SK-N-SH (cell line): ENCODE measurements at regions of chr7 and their contacts with region 1.

Region 1: GRCh38 chr7:29189743-29190201 is 4.8 kb upstream of the CHN2 start:
- DNase-seq: peak; percentile 87
- H3K4me3 ChIP-seq: no peak overlapping the region; a peak in 2 of 4 replicates
- H3K27ac ChIP-seq: no peak overlapping the region
- H3K4me1 ChIP-seq: peaks cover 0 to 6% of the 10 kb centered on the region in 2 experiments; a peak in 1 of 4 replicates
- H3K27me3 ChIP-seq: peaks cover 19% of the 10 kb centered on the region
- CTCF ChIP-seq: peak; percentile 91
- EP300 ChIP-seq: no peak
- RAD21 ChIP-seq: peak; percentile 87

Region 2: DNA sequence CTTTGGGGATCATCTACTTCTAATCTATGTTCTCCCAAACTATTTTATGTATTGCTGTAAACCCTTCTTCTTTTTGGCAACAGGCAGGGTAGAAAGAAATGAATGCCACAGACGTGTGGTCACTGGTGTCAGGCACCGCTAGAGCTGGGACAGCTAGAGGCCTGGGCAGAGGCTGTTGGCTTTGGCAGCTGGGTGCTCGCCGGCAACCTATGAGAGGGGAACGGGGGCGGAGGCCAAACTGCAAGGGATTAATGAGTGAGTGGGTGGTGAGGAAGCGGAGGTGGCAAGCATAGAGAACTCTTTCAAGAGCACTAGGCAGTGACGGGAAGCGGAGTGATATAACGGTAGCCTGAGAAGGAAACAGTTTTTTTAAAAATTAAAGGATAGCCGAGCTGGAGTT is 698.9 kb before region 1 on chr7:
- CTCF ChIA-PET with region 1: no interaction called
- POLR2A ChIA-PET with region 1: no interaction called
- DNase-seq: no peak
- H3K4me3 ChIP-seq: no peak overlapping the region
- H3K27ac ChIP-seq: no peak overlapping the region
- H3K4me1 ChIP-seq: peaks cover 0 to 3% of the 10 kb centered on the region in 2 experiments; a peak in 1 of 4 replicates
- H3K27me3 ChIP-seq: no peaks in the 10 kb centered on the region
- CTCF ChIP-seq: no peak
- EP300 ChIP-seq: no peak
- RAD21 ChIP-seq: no peak

Region 3: DNA sequence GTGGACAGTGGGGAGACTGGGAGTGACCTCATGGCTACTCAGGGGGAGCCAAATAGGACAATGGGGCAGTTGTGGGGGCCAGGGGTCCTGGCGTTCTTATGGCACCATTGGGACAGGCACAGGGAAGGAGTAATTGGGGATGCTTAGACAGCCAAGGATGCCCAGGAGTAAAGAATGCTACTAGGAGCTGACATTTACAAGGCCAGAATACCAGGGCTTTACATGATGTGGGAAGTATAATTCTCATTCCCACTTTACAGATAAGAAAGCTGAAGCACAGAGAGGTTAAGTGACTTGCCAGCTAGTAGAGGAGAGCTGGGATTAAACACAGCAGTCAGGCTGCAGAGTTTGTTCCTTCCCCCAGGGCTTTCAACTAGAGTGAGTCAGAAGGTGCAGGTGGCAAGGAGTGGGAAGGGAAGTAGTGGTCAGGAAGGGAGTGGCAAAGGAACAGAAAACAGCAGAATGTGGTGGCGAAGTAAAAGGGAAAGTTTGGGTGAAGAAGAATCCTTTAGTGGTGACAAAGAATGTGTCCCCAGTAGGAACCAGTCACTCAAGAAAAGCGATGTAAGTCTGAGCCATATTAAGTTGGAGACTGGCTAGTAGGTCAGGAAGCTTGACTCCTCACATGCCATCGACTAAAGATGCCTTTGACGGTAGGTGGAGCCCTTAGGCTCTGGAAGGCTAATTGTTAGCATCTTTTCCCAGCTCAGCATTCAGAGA is 76.2 kb before region 1 on chr7:
- CTCF ChIA-PET with region 1: interaction called, 38 read pairs
- POLR2A ChIA-PET with region 1: no interaction called
- DNase-seq: no peak
- H3K4me3 ChIP-seq: no peak overlapping the region
- H3K27ac ChIP-seq: no peak overlapping the region
- H3K4me1 ChIP-seq: no peaks in the 10 kb centered on the region
- H3K27me3 ChIP-seq: peaks cover 15% of the 10 kb centered on the region
- CTCF ChIP-seq: peak; percentile 24; the same call in 1 of the 2 replicates
- EP300 ChIP-seq: no peak
- RAD21 ChIP-seq: peak; percentile 62

Region 4: DNA sequence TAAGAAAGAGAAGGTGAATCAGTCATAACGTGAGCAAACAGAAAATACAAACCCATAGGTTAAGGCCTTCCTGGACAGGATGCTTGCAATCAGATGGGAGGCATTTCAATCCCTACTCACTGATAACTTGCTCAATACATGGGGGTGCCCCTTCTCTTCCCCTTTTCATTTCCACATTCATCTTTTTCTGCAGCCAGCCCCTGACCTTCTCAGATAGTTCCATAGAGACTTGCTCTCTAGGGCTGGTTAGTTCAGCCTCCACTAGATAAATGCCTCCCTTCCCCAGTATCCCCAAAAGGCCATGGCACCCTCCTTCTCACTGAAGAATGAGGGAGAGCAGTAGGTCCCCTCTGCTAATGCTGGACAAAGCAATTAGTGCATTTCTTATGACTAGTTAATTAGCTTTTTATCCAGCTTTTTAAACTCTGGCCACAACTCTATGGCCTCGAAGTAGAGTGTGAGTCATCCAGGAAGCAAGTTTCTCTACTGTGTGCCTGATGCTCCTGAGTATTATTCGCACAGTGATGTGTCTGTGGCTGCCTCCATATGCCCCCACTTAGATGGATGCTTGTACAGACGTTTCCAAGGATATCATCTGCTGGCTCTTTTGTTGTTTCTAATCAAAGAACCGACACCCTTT is 17.5 kb after region 1 on chr7:
- CTCF ChIA-PET with region 1: interaction called, 69 read pairs
- POLR2A ChIA-PET with region 1: no interaction called
- DNase-seq: no peak
- H3K4me3 ChIP-seq: no peak overlapping the region
- H3K27ac ChIP-seq: no peak overlapping the region
- H3K4me1 ChIP-seq: no peaks in the 10 kb centered on the region
- H3K27me3 ChIP-seq: no peaks in the 10 kb centered on the region
- CTCF ChIP-seq: no peak
- EP300 ChIP-seq: no peak
- RAD21 ChIP-seq: no peak

Region 5: DNA sequence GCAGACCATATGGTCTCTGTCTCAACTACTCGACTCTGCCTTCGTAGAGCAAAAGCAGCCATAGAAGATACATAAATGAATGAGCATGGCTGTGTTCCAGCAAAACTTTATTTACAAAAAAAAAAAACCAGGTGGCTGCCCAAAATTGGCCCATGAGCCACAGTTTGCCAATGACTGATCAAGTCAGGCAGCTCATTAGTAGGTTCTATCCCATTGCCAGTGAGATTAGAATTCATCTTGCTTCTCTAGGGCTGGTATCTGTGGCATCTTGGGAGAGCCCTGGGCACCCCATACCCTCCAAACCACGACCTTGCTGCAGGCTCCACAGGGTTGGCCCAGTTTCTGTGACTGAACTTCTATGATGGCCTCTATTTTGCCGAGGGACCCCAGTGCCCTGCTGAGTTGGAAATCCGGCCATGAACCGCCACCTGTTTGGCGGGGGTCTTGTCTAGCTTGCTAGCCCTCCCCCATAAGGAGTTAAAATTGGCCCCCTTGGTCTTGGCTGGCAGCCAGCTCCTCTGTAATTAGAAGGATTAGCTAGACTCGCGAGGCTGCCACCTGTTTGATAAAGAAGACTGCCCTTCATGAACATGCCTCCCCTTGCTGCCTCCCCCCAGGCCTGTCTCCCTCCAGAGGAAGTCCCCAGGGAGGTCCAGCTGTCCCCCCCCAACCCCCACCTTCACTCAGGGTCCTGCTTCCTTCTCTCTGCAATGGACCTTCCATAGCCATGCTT is 88.7 kb after region 1 on chr7:
- CTCF ChIA-PET with region 1: interaction called, 18 read pairs
- POLR2A ChIA-PET with region 1: no interaction called
- DNase-seq: no peak
- H3K4me3 ChIP-seq: no peak overlapping the region
- H3K27ac ChIP-seq: no peak overlapping the region
- H3K4me1 ChIP-seq: peaks cover 0 to 18% of the 10 kb centered on the region in 2 experiments; a peak in 3 of 4 replicates
- H3K27me3 ChIP-seq: peaks cover 19% of the 10 kb centered on the region; the same call in 1 of the 2 replicates
- CTCF ChIP-seq: no peak
- EP300 ChIP-seq: no peak
- RAD21 ChIP-seq: no peak

Region 6: DNA sequence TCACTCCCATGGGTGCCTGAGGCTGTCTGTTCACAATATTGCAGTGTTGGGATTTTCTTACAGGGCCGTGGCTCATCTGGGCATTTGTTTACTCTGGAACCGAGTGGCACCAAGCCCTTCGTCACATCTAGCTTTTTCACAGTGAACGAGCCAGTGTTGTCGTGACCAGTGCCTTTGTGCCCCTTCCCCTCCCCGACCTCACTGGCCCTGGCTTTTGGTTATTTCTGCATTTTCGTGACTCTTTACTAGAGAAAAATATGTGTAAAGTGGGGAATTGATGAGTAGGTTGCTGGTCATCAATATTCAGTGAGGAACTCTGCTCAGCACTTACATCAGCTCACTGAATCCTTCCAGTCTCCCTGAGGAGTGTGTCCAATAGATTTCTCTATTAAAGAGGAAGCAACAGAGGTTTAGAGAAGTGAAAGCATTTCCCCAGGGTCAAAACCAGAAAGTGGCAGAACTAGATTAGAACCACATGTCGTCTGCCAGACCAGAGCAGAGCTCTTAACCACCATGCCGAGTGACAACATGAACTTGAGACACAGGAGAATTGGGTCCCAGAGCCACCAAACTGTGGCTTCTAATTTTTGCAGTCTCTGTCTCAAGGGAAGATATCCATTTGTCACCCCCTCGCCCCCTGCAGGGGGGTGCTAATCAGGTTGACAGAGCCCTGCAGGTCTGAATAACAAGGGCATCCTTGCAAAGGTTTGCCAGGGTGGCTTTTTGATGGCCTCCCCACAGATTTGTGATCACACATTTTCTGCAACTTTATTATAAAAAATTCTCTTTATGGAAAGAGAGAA is 130.1 kb after region 1 on chr7:
- CTCF ChIA-PET with region 1: interaction called, 34 read pairs
- POLR2A ChIA-PET with region 1: no interaction called
- DNase-seq: peak; percentile 73
- H3K4me3 ChIP-seq: peak overlapping the region in 1 of 2 experiments; percentile 9; a peak in 1 of 4 replicates
- H3K27ac ChIP-seq: peak overlapping the region in 1 of 2 experiments; percentile 99; a peak in 3 of 4 replicates
- H3K4me1 ChIP-seq: peaks cover 10 to 38% of the 10 kb centered on the region in 2 experiments; a peak in 3 of 4 replicates
- H3K27me3 ChIP-seq: no peaks in the 10 kb centered on the region
- CTCF ChIP-seq: no peak
- EP300 ChIP-seq: peak in 1 of 2 experiments; percentile 84; a peak in 2 of 4 replicates
- RAD21 ChIP-seq: peak; percentile 29

Region 7: DNA sequence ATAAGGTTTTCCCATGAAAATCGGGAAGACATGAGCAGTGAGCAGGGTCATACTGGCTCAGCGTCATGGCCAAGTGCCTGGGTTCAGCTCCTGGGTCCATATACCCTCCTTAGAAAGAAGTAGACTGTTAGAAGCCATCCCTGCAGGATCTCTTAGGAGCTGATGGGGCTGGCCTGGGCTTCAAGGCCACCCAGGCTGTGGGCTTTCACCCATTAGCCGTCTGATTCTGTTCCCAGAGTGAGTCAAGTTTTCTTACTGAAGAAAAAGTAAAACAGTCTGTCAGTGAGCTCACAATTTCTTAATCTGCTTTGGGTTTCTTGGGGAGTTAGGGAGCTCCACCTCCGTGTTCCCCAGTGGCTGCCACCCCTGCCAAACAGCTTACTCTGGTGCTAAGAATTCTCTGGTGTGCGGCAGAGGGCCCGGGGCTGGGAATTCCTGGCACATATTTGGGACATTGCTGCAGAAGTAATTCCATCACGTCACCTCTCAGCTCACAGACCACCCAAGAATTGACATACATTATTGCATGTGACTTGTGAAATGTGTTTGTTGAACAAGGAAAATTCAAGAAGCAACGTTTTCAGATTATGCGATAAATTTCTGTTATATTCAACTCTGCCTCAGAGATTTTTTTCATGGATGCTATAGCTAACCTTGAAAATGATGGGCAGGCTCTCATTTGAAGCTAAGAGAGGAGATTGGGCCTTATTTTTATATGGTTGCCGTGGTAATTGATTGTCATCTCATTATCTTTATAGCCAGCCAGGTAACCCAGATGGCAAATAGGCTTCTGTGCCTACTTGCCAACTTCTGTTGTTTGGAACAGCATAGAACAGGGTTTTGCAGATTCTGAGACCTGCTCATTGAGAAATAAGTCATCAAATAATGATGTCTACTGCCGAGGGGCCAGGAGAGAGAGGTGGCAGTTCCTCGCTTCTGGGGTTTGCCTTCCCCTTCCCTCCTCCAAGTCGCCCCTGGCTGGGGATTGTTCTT is 171.2 kb after region 1 on chr7:
- CTCF ChIA-PET with region 1: interaction called, 37 read pairs
- POLR2A ChIA-PET with region 1: no interaction called
- DNase-seq: no peak
- H3K4me3 ChIP-seq: no peak overlapping the region
- H3K27ac ChIP-seq: no peak overlapping the region
- H3K4me1 ChIP-seq: no peaks in the 10 kb centered on the region
- H3K27me3 ChIP-seq: 0 out of 2 replicates have a peak, but pooled peaks cover 11% of the 10 kb centered on the region
- CTCF ChIP-seq: no peak
- EP300 ChIP-seq: no peak
- RAD21 ChIP-seq: no peak